ENCODE measurements at regions of chr10 and their contacts with region 1.

Region 1: DNA sequence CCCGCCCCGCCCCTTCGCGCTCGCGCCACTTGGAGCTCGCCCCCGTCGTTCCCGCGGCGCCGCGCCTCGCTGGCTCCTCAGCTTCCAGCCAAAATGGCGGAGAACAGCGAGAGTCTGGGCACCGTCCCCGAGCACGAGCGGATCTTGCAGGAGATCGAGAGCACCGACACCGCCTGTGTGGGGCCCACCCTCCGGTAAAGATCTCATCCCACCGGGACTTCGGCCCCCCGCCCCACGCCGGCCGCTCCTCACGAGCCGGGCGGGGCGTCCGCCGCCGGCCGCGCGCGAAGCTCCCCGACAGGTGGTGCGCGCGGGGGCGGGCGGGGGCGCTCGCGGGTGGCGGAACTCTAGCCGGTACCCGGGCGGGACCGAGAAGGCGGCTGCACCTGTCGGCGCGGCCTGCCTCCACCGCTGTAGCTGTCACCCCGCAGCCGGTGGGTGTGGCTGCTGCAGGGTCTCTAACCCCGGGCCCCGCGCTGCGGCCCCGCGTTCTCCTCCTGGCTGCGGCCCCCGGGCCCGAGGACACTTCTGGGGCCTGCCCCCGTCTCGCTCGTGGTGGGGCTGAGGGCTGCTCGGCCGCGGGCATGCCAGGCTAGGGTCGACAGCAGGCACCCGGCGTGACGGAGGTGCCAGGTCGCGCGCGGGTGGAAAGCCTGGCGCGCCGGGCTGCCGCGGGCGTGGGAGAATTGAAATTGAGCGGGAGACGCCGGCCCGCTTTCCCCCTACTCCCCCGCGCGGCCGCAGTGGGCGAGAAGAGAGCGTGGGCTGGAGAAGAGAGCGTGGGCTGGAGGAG is at the start of gene EXOC6:
- DNase-seq: peak; percentile 88
- H3K4me3 Mint-ChIP-seq: peak within 1 kb of the TSS; percentile 84
- H3K27ac Mint-ChIP-seq: peak within 1 kb of the TSS; percentile 74
- H3K4me1 Mint-ChIP-seq: peaks cover 41% of the 10 kb centered on the region
- H3K27me3 Mint-ChIP-seq: no peaks in the 10 kb centered on the region
- total RNA-seq, gene EXOC6: 10.7 to 10.8 TPM

Region 2: DNA sequence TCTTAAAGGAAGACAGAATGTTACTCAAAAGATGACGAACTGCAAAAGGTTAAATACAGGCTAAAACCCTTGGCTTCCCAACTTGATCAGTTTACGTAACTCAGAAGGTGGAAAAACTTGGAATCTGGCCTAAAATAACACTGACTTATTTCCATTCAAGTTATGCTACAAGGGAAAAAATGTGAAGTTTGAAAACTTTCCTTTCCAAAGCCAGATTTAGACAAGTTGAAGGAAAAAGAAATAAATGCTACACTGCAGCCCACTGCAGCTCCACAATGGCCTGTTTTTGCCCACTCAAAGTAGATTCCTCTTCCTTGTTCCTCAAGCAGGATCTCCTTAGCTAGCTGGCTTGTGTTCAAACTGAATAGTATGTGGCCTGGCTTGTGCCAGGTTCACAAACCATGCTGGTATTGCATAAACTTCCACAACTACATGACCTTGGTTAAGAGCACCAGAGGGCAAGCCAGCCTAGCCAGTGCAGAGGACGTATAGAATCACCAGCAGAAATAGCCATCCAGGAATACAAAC is 724.0 kb before region 1 on chr10:
- CTCF ChIA-PET with region 1: no interaction called
- POLR2A ChIA-PET with region 1: no interaction called
- intact Hi-C with region 1: no loop called
- DNase-seq: no peak
- H3K4me3 Mint-ChIP-seq: no peak overlapping the region
- H3K27ac Mint-ChIP-seq: no peak overlapping the region
- H3K4me1 Mint-ChIP-seq: no peaks in the 10 kb centered on the region
- H3K27me3 Mint-ChIP-seq: no peaks in the 10 kb centered on the region

Region 3: DNA sequence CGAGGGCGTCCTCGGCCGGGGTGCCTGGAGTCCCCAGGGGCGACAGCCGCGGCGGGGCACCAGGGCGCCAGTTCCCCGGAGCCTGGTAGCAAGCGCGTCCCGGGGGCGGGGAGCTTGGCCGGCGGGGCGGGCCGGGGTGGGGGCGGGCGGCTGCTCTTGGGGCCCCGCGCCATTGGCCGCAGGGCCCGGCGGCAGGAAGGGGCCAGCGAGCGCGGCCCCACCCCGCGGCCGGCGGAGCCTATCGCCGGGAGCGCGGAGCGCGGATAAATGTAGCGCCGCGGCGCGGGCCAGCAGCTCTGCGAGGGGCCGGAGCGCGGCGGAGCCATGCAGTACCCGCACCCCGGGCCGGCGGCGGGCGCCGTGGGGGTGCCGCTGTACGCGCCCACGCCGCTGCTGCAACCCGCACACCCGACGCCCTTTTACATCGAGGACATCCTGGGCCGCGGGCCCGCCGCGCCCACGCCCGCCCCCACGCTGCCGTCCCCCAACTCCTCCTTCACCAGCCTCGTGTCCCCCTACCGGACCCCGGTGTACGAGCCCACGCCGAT is 158.9 kb before region 1 on chr10 and contains the start of gene HHEX:
- CTCF ChIA-PET with region 1: interaction called, 4 read pairs
- POLR2A ChIA-PET with region 1: interaction called, 3 read pairs
- intact Hi-C with region 1: loop called (anchors 5 kb)
- DNase-seq: peak; percentile 46
- H3K4me3 Mint-ChIP-seq: peak within 1 kb of the TSS; percentile 53
- H3K27ac Mint-ChIP-seq: no peak within 1 kb of the TSS
- H3K4me1 Mint-ChIP-seq: peaks cover 20% of the 10 kb centered on the region
- H3K27me3 Mint-ChIP-seq: peaks cover 60% of the 10 kb centered on the region
- total RNA-seq, gene HHEX: 0.31 to 0.55 TPM

Region 4: DNA sequence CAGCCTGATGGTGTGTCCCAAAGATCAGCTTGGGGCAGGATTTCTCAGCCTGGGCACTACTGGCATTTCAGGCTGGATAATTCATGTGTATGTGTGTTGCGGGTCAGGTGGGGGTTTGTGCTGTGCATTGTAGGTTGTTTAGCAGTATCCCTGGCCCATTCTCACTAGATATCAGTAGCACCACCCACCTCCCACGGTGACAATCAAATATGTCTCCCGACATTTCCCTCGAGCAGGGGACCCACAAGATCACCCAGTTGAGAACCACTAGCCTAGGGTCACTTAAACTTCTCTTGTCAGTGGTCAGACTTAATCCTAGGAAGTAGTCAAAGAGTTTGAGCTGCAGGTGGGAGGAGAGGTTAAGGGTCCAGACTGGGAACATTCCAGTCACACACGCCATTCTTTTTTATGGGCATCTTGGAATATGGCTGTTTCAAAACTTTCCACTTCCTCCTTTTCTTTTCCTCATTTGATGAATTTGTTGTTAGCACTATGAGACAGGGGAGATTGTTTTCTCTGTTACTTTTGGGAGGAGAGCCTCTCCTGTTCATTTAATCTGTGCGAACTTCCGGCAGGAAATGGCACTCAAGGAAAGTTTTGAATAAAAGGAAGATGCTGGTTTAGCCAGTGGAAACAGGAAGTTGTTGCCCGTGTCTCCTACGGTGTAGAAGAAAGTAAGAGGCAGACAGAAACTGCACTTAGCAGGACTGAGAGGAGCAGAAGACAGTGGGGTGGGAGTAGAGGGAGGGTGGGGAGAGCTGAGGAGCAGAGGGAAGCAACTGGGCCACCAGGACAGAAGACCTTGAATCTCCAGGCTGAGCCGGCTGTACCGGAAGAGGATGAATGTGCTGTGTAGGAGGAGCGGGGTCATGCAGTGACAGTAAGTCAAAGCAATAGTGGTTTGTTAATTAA is 17.9 kb before region 1 on chr10:
- CTCF ChIA-PET with region 1: interaction called, 33 read pairs
- POLR2A ChIA-PET with region 1: no interaction called
- intact Hi-C with region 1: loop called (anchors 2 kb)
- DNase-seq: peak; percentile 58
- H3K4me3 Mint-ChIP-seq: peak overlapping the region; percentile 60
- H3K27ac Mint-ChIP-seq: peak overlapping the region; percentile 70
- H3K4me1 Mint-ChIP-seq: peaks cover 8% of the 10 kb centered on the region
- H3K27me3 Mint-ChIP-seq: no peaks in the 10 kb centered on the region

Region 5: GRCh38 chr10:92886334-92886961 is 37.8 kb after region 1 on chr10:
- CTCF ChIA-PET with region 1: interaction called, 22 read pairs
- POLR2A ChIA-PET with region 1: no interaction called
- intact Hi-C with region 1: no loop called
- DNase-seq: no peak
- H3K4me3 Mint-ChIP-seq: no peak overlapping the region
- H3K27ac Mint-ChIP-seq: no peak overlapping the region
- H3K4me1 Mint-ChIP-seq: peaks cover 2% of the 10 kb centered on the region
- H3K27me3 Mint-ChIP-seq: no peaks in the 10 kb centered on the region

Region 6: GRCh38 chr10:93496322-93497041 is 647.8 kb after region 1 on chr10 and contains the start of gene CEP55:
- CTCF ChIA-PET with region 1: no interaction called
- POLR2A ChIA-PET with region 1: no interaction called
- intact Hi-C with region 1: loop called (anchors 10 kb)
- DNase-seq: peak; percentile 98
- H3K4me3 Mint-ChIP-seq: peak within 1 kb of the TSS; percentile 90
- H3K27ac Mint-ChIP-seq: peak within 1 kb of the TSS; percentile 74
- H3K4me1 Mint-ChIP-seq: peaks cover 27% of the 10 kb centered on the region
- H3K27me3 Mint-ChIP-seq: no peaks in the 10 kb centered on the region
- total RNA-seq, gene CEP55: 88.0 to 91.3 TPM

Measured in activated CD4-positive, alpha-beta memory T cell treated with anti-CD3 and anti-CD28 coated beads for 36 hours (primary cell).